Naive thymus-derived CD8-positive, alpha-beta T cell (primary cell): ENCODE measurements at regions of chr2 and their contacts with region 1.

Region 1: DNA sequence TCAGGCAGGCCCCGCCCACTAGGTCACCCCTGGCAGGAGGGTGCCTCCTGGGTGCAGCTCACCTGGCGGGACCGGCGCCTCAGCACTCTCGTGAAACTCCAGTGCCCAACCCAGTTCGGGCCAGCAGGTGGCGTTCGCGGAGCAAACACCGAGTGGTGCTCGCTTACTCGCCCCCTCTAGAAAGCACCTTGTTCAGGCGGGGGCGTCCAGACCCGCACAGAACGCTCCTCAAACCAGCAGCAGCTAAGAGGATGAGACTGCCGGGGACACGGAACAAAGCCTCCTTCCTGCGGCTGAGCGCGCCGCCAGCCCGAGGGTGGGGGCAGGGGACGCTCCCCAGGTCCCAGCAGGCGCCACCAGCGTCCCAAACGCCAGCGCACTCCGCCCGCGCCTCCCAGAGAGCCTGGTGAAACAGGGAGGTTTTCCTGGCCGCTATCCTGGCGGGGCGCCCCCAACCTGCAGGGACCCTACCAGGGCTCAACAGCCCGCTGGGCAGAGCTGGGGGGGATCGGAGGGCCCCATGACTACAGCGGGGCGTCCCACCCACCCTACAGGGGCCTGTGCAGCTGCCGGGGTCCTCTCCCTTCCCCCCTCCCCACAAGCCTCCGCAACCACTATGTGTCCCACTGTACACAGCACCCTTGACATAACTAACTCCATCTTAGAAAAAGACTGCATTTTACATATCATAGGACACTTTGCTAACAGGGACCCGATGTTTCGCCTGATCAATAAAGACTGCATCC is 44.7 kb downstream of the MRPS5 start:
- DNase-seq: peak; percentile 83 to 95 (median 90)
- ATAC-seq: peak; percentile 72 to 80
- H3K4me3 Mint-ChIP-seq: peak overlapping the region; percentile 80 to 91 (median 88)
- H3K27ac Mint-ChIP-seq: peak overlapping the region; percentile 84 to 99 (median 96)
- H3K4me1 Mint-ChIP-seq: peaks cover 33 to 80% (median 75%) of the 10 kb centered on the region in 4 donors
- H3K27me3 Mint-ChIP-seq: no peaks in the 10 kb centered on the region

Region 2: DNA sequence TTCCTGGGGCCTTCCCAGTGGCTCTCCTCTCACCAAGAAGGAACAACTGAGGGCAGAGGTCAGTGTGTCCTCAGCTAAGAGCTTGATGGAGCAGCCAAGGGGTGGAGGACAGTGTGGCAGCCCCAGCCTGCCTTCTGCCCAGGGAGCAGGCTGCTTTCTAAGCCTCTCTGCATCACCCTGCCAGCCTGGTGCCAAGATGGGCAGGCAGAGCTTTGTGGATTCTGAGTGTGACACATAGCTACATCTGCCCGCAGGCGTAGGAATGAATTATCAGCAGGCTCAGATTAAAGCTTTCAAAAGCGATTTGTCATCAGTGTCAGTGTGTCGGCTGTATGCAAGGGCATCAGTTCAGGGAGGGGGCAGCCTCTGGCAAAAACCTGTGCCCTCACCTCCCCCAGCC is 42.7 kb before region 1 on chr2:
- POLR2A ChIA-PET with region 1: interaction called, 944 read pairs
- DNase-seq: peak in 1 of 10 donors; percentile 43
- ATAC-seq: peak in 1 of 2 donors; percentile 25
- H3K4me3 Mint-ChIP-seq: peak overlapping the region in 6 of 10 donors; percentile 15 to 56 (median 42)
- H3K27ac Mint-ChIP-seq: peak overlapping the region; percentile 48 to 97 (median 74)
- H3K4me1 Mint-ChIP-seq: peaks cover 50 to 96% (median 86%) of the 10 kb centered on the region in 4 donors
- H3K27me3 Mint-ChIP-seq: no peaks in the 10 kb centered on the region

Region 3: DNA sequence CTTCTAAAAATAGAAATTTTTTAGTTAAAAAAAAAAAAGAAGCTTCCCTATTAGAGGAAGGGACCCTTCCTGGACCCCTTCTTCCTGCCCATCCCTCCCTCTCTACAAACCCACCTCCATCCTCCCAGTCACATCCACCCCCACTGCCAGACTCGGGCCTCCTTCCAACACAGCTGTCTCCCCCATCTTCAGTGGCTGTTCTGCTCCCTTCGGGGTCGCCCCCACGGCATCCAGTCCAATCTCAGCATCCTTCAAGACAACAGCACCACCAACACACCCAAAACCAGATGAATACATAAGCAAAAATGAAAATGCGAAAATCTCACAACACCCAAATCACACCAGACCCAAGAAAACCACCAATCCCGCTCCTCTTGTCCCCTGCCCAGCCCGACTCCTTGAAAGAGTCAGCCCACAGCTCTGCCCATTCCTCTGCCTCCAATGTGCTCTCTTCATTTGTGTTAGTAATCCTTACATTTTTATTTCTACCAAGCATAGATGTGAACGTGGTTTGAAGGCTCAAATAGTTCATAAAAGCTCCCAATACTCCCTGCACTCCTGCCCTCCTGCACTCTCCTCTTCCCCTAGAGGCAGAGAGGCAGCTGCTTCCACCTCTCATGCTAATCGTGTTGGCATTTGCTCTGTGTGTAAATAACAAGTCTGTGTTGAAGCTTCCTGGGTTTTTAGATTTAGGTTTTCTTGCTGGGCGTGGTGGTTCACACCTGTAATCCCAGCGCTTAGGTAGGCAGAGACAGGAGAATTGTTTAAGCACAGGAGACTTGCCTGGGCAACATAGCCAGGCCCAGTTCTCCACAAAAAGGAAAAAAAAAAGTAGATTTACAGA is 14.5 kb before region 1 on chr2:
- POLR2A ChIA-PET with region 1: interaction called, 537 read pairs
- DNase-seq: no peak
- ATAC-seq: peak; percentile 42 to 50
- H3K4me3 Mint-ChIP-seq: peak overlapping the region; percentile 20 to 77 (median 59)
- H3K27ac Mint-ChIP-seq: peak overlapping the region; percentile 66 to 96 (median 84)
- H3K4me1 Mint-ChIP-seq: peaks cover 24 to 40% (median 32%) of the 10 kb centered on the region in 4 donors
- H3K27me3 Mint-ChIP-seq: no peaks in the 10 kb centered on the region

Region 4: DNA sequence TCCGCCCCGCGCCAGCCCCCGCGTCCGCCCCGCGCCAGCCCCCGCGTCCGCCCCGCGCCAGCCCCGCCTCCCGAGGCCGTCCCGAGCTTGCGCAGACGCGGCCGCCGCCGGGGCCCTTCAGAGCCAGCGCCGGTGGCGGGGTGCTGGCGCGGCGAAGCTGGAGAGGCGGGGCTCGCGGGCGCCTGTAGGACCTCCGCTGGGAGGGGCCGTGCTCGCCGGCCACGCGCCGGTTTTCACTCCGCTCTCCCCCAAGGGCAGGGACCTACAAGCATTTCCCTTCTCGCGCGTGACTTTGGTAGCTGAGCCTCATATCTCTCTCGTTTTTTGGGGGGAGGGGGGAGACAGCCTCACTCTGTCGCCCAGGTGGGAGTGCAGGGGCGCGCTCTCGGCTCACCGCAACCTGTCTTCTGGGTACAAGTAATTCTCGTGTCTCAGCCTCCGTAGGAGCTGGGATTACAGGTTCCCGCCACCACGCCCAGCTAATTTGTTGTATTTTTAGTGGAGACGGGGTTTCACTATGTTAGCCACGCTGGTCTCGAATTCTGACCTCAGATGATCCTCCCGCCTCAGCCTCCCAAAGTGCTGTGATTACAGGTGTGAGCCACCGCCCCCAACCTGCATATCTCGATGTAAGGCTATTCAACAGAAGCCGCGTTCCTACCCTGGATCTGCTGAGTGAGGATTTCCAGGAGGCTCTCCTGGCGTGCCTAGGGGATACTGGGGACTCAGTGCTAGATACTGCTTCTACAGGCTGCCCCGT is 82.9 kb after region 1 on chr2 and contains the start of gene ZNF514:
- POLR2A ChIA-PET with region 1: interaction called, 15 read pairs
- DNase-seq: peak; percentile 69 to 81 (median 76)
- ATAC-seq: peak; percentile 84 to 88
- H3K4me3 Mint-ChIP-seq: peak within 1 kb of the TSS; percentile 86 to 95 (median 90)
- H3K27ac Mint-ChIP-seq: peak within 1 kb of the TSS; percentile 84 to 94 (median 92)
- H3K4me1 Mint-ChIP-seq: peaks cover 3 to 32% (median 29%) of the 10 kb centered on the region in 4 donors
- H3K27me3 Mint-ChIP-seq: no peaks in the 10 kb centered on the region
- polyA plus RNA-seq, gene ZNF514: 10.0 to 11.2 (median 10.3) TPM

Region 5: DNA sequence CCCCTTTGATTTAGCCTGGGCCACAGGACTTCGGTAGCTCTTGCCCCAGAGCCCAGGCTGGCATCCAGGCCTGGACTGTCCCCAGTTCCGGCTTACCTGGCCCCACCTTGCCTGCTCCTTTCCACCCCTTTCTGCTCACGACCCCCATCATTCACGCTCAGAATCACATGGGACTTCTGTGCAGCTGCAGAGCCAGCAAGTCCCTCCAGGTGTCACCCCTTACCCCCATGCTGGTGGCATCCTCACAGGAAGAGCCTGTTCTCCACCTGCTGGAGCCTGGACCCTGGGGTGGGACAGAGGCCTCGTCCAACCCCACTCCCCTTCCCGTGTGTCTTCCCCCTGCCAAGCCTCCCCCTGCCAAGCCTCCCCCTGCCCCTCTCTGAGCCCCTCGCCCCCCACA is 212.3 kb after region 1 on chr2:
- POLR2A ChIA-PET with region 1: no interaction called
- DNase-seq: no peak
- ATAC-seq: no peak
- H3K4me3 Mint-ChIP-seq: no peak overlapping the region
- H3K27ac Mint-ChIP-seq: peak overlapping the region in 1 of 10 donors; percentile 43
- H3K4me1 Mint-ChIP-seq: no peaks in the 10 kb centered on the region
- H3K27me3 Mint-ChIP-seq: no peaks in the 10 kb centered on the region